Activated B cell treated with CpG ODN at 0.5 μM for 24 hours (primary cell): ENCODE measurements at regions of chr20 and their contacts with region 1.

Region 1: DNA sequence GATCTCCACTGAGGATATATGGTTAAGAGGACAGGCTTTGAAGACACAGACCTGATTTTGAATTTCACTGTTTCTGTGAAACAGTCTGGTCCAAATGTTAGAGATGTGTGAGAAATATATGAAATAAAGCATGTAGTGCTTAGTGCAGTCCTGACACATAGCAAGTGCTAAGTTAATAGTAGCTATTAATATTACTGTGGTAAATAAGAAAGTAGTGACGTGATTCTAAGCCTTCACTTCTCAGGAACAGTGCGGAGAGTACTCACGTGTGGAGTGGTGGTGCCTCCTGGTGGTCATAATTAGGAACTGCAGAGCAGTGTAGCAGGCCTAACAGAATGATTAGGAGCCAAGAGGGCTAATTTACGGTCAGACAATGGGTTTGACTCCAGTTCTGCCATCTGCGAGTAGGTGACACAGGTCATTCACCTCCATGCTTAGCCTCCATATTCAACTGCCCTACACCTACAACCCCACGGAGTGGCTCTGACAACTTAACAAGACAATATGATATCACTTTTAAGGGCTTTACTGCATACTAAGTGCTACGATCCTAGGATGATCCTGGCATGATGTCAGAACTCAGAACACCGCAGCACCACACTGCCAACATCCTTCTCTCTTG is 106.2 kb downstream of the JPH2 start:
- DNase-seq: peak; percentile 52
- ATAC-seq: peak; percentile 99
- H3K4me3 Mint-ChIP-seq: no peak overlapping the region
- H3K27ac Mint-ChIP-seq: no peak overlapping the region
- H3K4me1 Mint-ChIP-seq: peaks cover 4% of the 10 kb centered on the region
- H3K27me3 Mint-ChIP-seq: no peaks in the 10 kb centered on the region
- CTCF ChIP-seq: peak; percentile 56

Region 2: GRCh38 chr20:43537921-43538877 is 542.6 kb before region 1 on chr20:
- CTCF ChIA-PET with region 1: interaction called, 17 read pairs
- POLR2A ChIA-PET with region 1: no interaction called
- intact Hi-C with region 1: loop called (anchors 1 kb)
- DNase-seq: peak; percentile 30
- ATAC-seq: peak; percentile 65
- H3K4me3 Mint-ChIP-seq: no peak overlapping the region
- H3K27ac Mint-ChIP-seq: no peak overlapping the region
- H3K4me1 Mint-ChIP-seq: no peaks in the 10 kb centered on the region
- H3K27me3 Mint-ChIP-seq: no peaks in the 10 kb centered on the region
- CTCF ChIP-seq: peak; percentile 52

Region 3: DNA sequence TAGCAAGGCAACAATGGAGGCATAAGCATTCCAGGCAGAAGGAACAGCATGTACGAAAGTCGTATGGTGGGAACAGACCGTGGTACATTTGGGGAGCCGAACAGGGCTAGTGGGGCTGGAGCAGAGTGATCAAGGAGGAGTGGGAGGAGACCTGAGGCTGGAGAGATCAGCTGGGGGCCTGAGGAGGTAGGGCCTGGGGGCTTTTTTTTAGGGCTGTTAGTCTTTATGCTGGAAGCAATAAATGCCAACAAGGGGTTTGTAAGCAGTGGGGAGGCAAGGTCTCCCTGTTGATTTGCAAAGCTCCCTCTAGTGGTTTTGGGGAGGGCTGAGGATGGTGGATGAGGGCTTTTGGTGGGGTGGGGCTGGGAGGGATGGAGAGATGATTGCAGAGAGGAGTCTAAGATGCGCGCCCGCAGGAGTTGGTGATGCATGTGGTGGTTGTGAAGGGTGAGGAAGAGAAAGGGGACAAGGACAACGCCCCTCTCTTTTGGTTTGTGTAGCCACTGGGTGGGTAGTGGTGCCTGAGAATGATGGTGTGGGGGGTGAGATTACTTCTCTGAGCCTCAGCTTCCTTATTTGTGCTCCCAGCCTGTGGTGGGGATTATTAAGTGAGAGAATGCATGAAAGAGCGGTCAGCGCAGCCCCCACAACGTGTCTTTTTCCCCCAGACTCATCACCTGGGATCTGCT is 240.2 kb before region 1 on chr20:
- CTCF ChIA-PET with region 1: interaction called, 7 read pairs
- POLR2A ChIA-PET with region 1: no interaction called
- intact Hi-C with region 1: loop called (anchors 10 kb)
- DNase-seq: no peak
- ATAC-seq: peak; percentile 82
- H3K4me3 Mint-ChIP-seq: no peak overlapping the region
- H3K27ac Mint-ChIP-seq: no peak overlapping the region
- H3K4me1 Mint-ChIP-seq: peaks cover 6% of the 10 kb centered on the region
- H3K27me3 Mint-ChIP-seq: no peaks in the 10 kb centered on the region
- CTCF ChIP-seq: no peak

Region 4: DNA sequence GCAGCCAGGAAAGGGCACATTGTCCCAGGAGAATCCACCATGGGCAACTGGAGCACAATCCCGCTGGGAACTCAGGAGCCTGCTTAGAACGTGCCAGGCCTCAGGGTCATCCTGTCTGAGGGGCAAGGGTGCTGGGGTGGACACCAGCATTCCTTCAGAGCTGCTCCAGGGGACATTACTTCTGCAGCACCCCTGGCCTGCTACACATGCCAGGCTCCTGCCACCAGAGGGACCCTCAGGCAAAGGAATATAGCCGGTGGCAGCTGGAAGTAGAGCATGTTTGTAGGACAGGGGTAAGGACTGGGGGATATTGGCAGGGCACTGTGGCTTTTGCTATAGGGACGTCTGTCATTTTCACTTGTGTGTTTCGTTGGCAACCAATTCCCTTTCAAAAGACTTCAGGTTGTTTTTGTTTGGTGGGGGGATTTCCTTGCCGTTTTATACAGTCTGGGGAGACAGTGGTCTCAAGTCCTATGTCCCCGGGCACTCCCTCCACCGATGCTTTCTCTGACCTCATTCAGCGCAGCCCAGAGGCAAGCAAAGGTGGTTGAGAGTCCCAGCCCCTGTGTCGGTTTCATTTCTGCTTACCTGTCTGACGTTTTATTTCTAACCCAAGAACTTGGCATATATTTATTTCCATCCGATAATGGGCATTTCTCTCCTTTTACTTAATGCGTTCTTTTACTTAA is 24.6 kb before region 1 on chr20:
- CTCF ChIA-PET with region 1: interaction called, 6 read pairs
- POLR2A ChIA-PET with region 1: no interaction called
- intact Hi-C with region 1: loop called (anchors 1 kb)
- DNase-seq: no peak
- ATAC-seq: no peak
- H3K4me3 Mint-ChIP-seq: no peak overlapping the region
- H3K27ac Mint-ChIP-seq: no peak overlapping the region
- H3K4me1 Mint-ChIP-seq: no peaks in the 10 kb centered on the region
- H3K27me3 Mint-ChIP-seq: peaks cover 3% of the 10 kb centered on the region
- CTCF ChIP-seq: no peak